Right ventricle myocardium superior (tissue), 1 donor: ENCODE measurements at regions of chr12 and their contacts with region 1.

Region 1: GRCh38 chr12:70590051-70590450 is 47.2 kb downstream of the PTPRB start:
- DNase-seq: peak; percentile 80
- ATAC-seq: peak; percentile 71

Region 2: DNA sequence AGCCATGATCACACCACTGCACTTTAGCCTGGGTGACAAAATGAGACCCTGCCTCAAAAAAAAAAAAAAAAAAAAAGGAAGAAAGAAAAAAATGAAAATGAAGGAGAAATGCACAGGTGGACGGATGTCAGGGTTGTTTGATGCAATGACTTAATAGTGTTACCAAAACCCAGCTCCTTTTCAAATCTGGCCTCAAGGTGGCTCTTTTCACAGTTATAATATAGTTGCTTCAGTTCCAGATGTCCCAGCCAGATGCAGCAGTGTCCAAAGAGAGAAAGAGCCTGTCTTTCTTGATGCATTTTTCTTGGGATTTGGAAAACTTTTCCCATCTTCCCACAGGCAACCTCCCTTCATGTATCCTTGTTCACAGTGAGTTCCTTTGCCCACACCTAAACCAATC is 187.5 kb before region 1 on chr12:
- intact Hi-C with region 1: no loop called
- DNase-seq: no peak
- ATAC-seq: no peak

Region 3: GRCh38 chr12:70719672-70720420 is 129.8 kb after region 1 on chr12:
- intact Hi-C with region 1: loop called (anchors 5 kb)
- DNase-seq: peak; percentile 61
- ATAC-seq: peak; percentile 83

Region 4: GRCh38 chr12:71194657-71195056 is 604.6 kb after region 1 on chr12:
- intact Hi-C with region 1: no loop called
- DNase-seq: no peak
- ATAC-seq: no peak